Pancreas (tissue), 10 donors: ENCODE measurements at regions of chr4 and their contacts with region 1.

Region 1: GRCh38 chr4:89024051-89024675 is 32.8 kb downstream of the FAM13A start:
- DNase-seq: peak in 3 of 6 donors; percentile 56 to 67 (median 64)
- ATAC-seq: peak; percentile 93 to 97 (median 94)
- H3K4me3 ChIP-seq: no peak overlapping the region
- H3K27ac ChIP-seq: peak overlapping the region in 2 of 4 donors; percentile 52 to 71
- H3K4me1 ChIP-seq: peaks cover 14 to 27% (median 24%) of the 10 kb centered on the region in 3 donors
- H3K27me3 ChIP-seq: no peaks in the 10 kb centered on the region
- CTCF ChIP-seq: peak; percentile 56 to 80 (median 66)

Region 2: DNA sequence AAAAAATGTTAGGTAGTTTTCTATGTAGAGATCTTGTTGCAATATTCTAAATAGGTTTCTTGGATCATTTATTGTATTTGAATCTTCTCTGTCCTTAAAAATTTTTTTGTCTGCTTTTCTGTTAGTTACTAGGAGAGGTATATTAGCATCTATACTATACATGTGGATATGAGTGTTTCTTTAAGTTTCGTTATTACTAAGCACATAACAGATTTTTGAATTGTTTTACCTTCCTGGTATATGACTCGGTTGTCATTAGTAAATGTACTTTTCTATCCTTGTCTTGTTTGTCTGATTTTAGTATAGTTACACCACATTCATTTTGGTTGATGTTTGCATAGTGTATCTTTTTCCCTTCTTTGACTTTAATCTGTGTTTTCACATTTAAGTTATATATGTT is 520.8 kb before region 1 on chr4:
- intact Hi-C with region 1: no loop called
- DNase-seq: no peak
- ATAC-seq: no peak
- H3K4me3 ChIP-seq: no peak overlapping the region
- H3K27ac ChIP-seq: no peak overlapping the region
- H3K4me1 ChIP-seq: no peaks in the 10 kb centered on the region
- H3K27me3 ChIP-seq: no peaks in the 10 kb centered on the region
- CTCF ChIP-seq: no peak

Region 3: DNA sequence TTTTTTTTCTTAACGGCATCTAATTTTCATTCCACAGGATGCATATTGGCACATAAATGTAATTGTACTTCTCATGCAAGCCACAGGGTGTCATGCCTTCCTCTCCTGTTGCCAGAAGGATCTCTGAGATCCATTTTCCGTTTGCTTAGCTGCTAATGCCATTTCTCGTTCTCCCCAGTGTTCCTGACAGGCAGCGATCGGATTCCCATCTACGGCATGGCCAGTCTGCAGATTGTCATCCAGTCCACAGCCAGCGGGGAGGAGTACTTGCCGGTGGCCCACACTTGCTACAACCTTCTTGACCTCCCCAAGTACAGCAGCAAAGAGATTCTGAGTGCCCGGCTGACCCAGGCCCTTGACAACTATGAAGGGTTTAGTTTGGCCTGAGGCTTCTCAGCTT is 317.6 kb before region 1 on chr4:
- intact Hi-C with region 1: loop called in 2 of 3 experiments (anchors 10 kb)
- DNase-seq: peak in 3 of 6 donors; percentile 28 to 57 (median 30)
- ATAC-seq: peak; percentile 89 to 99 (median 98)
- H3K4me3 ChIP-seq: no peak overlapping the region
- H3K27ac ChIP-seq: no peak overlapping the region
- H3K4me1 ChIP-seq: no peaks in the 10 kb centered on the region
- H3K27me3 ChIP-seq: no peaks in the 10 kb centered on the region
- CTCF ChIP-seq: peak; percentile 14 to 51 (median 45)

Region 4: GRCh38 chr4:88823058-88823919 is 200.9 kb before region 1 on chr4:
- intact Hi-C with region 1: loop called in 2 of 3 experiments (anchors 5 to 10 kb)
- DNase-seq: peak; percentile 75 to 93 (median 85)
- ATAC-seq: peak; percentile 88 to 93 (median 90)
- H3K4me3 ChIP-seq: peak overlapping the region; percentile 18 to 51 (median 32)
- H3K27ac ChIP-seq: peak overlapping the region; percentile 83 to 97 (median 88)
- H3K4me1 ChIP-seq: peaks cover 11 to 21% (median 14%) of the 10 kb centered on the region in 3 donors
- H3K27me3 ChIP-seq: no peaks in the 10 kb centered on the region
- CTCF ChIP-seq: no peak

Region 5: GRCh38 chr4:89101256-89102161 is 77.3 kb after region 1 on chr4:
- intact Hi-C with region 1: no loop called
- DNase-seq: no peak
- ATAC-seq: no peak
- H3K4me3 ChIP-seq: no peak overlapping the region
- H3K27ac ChIP-seq: no peak overlapping the region
- H3K4me1 ChIP-seq: no peaks in the 10 kb centered on the region
- H3K27me3 ChIP-seq: no peaks in the 10 kb centered on the region
- CTCF ChIP-seq: no peak

Region 6: DNA sequence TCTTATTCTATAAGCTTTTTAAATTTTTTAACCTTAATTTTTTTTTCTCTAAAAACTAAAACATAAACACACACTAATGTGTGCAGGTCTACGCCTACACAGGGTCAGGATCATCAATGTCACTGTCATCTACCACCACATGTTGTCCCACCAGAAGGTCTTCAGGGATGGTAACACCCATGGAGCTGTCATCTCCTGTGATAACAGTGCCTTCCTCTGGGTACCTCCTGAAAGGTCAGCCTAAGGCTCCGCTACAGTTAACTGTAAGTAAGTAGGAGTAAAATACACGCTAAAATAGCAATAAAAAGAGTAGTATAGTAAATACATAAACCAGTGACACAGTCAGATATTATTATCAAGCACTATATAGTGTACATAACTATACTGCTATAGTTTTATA is 329.4 kb after region 1 on chr4:
- intact Hi-C with region 1: no loop called
- DNase-seq: no peak
- ATAC-seq: no peak
- H3K4me3 ChIP-seq: no peak overlapping the region
- H3K27ac ChIP-seq: no peak overlapping the region
- H3K4me1 ChIP-seq: no peaks in the 10 kb centered on the region
- H3K27me3 ChIP-seq: no peaks in the 10 kb centered on the region
- CTCF ChIP-seq: no peak

Region 7: GRCh38 chr4:90012918-90013317 is 988.8 kb after region 1 on chr4:
- intact Hi-C with region 1: no loop called
- DNase-seq: no peak
- ATAC-seq: no peak
- H3K4me3 ChIP-seq: no peak overlapping the region
- H3K27ac ChIP-seq: no peak overlapping the region
- H3K4me1 ChIP-seq: no peaks in the 10 kb centered on the region
- H3K27me3 ChIP-seq: no peaks in the 10 kb centered on the region
- CTCF ChIP-seq: no peak